H1 (cell line): ENCODE measurements at regions of chr22 and their contacts with region 1.

Region 1: GRCh38 chr22:23163665-23164064 is 16.6 kb upstream of the BCR start:
- DNase-seq: no peak
- H3K4me3 ChIP-seq: no peak overlapping the region
- H3K27ac ChIP-seq: no peak overlapping the region
- H3K4me1 ChIP-seq: peaks cover 0 to 12% (median 7%) of the 10 kb centered on the region in 4 experiments; a peak in 5 of 7 replicates
- H3K27me3 ChIP-seq: no peaks in the 10 kb centered on the region
- CTCF ChIP-seq: no peak
- EP300 ChIP-seq: no peak
- POLR2A ChIP-seq: no peak
- RAD21 ChIP-seq: no peak

Region 2: DNA sequence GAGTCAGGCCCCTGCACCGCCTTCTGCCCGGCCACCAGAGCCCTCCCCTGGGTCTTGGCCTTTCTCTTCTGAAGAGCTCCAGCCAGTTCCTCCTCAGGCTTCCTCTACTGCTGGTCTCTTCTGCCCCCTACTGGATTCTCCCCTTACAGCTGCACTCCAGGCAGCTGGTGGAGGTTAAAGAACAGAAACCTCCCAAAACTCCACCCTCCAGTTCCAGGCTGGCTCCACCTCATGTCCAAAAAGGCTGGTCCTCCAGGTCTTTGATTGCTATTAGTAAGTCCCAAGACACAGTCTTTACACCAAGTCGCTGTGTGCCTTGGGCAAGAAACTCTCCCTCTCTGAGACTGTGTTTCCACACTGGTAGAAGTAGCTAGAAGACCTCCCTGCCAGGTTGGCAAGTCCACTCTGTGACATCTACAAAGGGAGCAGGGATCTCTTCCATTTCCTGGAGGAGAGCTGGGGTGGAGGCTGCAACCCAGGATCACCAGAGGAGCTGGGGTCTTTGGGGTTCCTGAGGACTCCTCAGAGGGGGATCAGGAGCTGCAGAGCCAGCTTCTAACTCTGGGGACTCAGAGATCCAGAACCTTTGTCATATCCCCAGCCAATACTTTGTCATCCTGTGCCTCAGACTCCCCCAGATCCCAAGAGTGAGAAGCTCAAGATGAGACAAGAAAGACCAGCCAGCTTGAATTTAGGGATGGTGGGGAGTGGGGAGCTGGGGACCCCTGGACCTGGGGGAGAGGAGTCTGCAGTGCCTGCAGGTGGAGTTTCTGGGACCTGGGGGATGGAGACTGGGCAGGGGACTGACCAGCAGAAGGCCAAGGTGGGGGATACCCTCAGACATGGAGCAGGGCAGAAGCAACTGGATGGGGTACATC is 279.4 kb before region 1 on chr22:
- CTCF ChIA-PET with region 1: no interaction called
- POLR2A ChIA-PET with region 1: no interaction called
- DNase-seq: peak in 1 of 2 experiments; percentile 78
- H3K4me3 ChIP-seq: no peak overlapping the region
- H3K27ac ChIP-seq: no peak overlapping the region
- H3K4me1 ChIP-seq: no peaks in the 10 kb centered on the region
- H3K27me3 ChIP-seq: peaks cover 5 to 20% (median 14%) of the 10 kb centered on the region in 4 experiments
- CTCF ChIP-seq: peak; percentile 52 to 87 (median 64)
- EP300 ChIP-seq: no peak
- POLR2A ChIP-seq: no peak
- RAD21 ChIP-seq: peak; percentile 75 to 86

Region 3: GRCh38 chr22:23152315-23153113 is 11.2 kb before region 1 on chr22:
- CTCF ChIA-PET with region 1: interaction called, 21 read pairs
- POLR2A ChIA-PET with region 1: interaction called, 3 read pairs
- DNase-seq: no peak
- H3K4me3 ChIP-seq: no peak overlapping the region
- H3K27ac ChIP-seq: no peak overlapping the region
- H3K4me1 ChIP-seq: peaks cover 0 to 27% (median 12%) of the 10 kb centered on the region in 4 experiments; a peak in 5 of 7 replicates
- H3K27me3 ChIP-seq: no peaks in the 10 kb centered on the region; a peak in 1 of 7 replicates
- CTCF ChIP-seq: no peak
- EP300 ChIP-seq: no peak
- POLR2A ChIP-seq: no peak
- RAD21 ChIP-seq: no peak